ENCODE measurements at regions of chr1 and their contacts with region 1.

Region 1: GRCh38 chr1:169367486-169368405 is at the starts of genes BLZF1 and NME7:
- DNase-seq: peak; percentile 99
- H3K4me3 Mint-ChIP-seq: no peak within 1 kb of the TSS
- H3K27ac Mint-ChIP-seq: peak within 1 kb of the TSS; percentile 36
- H3K4me1 Mint-ChIP-seq: peaks cover 35% of the 10 kb centered on the region
- H3K27me3 Mint-ChIP-seq: no peaks in the 10 kb centered on the region
- total RNA-seq, gene BLZF1: 15.1 and 16.1 TPM in 2 replicates
- total RNA-seq, gene NME7: 13.9 and 25.8 TPM in 2 replicates

Region 2: DNA sequence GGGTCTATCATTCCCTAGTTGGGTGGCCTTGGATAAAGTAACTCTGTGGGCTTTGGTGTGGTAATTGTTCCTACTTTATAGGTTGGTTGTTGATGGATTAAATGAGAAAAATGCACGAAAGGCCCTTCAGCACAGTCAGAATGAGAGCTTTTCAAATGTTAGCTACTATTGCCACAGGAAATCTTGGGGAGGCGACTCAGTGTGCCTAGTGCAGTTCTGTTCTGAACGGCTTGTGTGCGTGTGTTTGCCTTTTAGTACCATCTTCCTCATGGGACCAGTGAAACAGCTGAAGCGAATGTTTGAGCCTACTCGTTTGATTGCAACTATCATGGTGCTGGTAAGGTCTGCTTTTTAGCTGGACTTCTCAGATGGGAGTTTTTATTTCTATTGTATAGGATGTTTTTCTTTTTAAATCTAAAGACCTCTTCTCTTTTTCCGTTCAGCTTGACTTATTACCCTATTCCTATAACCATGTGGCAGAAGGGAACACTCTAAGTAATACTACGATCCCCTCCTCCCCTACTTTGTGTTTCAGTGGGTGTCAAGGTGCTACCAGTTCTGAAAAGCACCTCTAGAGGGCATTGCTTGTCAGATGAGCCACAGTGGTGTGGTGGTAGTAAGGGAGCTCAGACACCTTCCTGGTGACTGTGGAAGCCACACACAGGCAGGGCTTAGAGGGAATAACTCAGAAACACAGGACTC is 1132.7 kb before region 1 on chr1:
- intact Hi-C with region 1: loop called (anchors 5 kb)
- DNase-seq: peak; percentile 39
- H3K4me3 Mint-ChIP-seq: peak overlapping the region; percentile 37
- H3K27ac Mint-ChIP-seq: peak overlapping the region; percentile 82
- H3K4me1 Mint-ChIP-seq: peaks cover 76% of the 10 kb centered on the region
- H3K27me3 Mint-ChIP-seq: no peaks in the 10 kb centered on the region

Region 3: DNA sequence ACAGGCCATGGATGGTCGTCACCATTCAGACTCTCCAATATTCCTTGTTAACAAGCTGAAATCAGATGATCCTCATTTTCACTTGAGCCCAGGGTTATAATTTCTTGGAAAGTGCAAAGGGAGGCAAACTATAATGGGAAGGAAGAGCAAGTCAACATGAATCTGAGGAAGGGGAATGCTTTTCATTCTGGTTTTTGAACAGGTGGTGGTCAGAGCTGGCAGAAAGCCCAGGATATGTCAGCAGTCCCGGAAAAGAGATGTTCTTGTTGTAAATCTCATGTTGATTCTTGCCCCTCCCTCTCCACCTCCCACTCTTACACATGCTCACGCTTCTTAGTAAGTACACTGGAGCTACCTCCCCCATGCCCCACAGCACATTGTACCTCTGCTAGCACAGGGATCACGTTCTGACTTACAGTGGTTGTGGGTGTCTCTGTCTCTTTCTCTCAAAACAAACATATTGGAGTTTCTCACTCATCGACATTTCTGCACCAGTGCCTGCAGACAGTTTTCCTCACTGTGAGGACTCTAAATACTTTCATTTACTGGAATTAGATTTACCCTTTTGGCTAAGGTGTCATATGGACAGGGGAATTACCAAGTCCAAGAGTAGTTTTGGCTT is 901.5 kb before region 1 on chr1:
- intact Hi-C with region 1: loop called (anchors 10 kb)
- DNase-seq: peak; percentile 18
- H3K4me3 Mint-ChIP-seq: peak overlapping the region; percentile 30
- H3K27ac Mint-ChIP-seq: peak overlapping the region; percentile 71
- H3K4me1 Mint-ChIP-seq: peaks cover 67% of the 10 kb centered on the region
- H3K27me3 Mint-ChIP-seq: no peaks in the 10 kb centered on the region

Region 4: DNA sequence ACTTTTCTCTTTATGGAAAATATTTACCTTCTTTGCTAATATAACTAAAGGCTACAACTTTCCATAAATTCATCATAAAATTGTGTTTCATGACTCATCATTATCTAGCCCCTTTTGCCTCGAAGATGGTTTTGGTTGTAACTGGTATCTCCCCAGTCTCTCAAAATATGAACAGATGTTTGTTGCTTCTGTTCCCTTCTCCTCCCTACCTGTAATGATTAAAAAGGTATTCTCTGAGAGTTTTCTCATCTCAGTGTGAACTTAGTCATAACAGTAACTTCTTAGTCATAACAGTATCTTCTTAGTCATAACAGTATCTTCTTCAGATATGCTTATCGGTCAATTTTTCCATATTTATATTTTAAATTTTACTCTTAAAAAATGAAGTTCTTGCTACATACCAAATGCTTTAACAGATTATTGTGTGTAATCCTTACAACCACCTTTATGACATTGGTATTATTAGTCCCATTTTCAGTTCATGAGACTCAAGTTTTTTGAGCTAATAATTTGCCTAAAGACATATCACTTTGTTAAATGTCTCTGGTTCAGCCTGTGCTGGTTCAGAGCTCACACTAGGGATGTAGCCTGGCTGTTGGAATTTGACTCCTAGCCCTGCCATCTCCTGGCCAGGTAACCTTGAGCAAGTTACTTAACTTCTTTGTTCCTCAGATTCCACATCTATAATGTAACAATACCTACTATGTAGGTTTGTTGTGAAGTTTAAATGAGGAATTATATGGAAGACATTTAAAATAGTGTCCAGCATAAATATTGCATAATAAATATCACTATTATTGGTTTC is 228.7 kb before region 1 on chr1:
- intact Hi-C with region 1: loop called (anchors 1 kb)
- DNase-seq: no peak
- H3K4me3 Mint-ChIP-seq: no peak overlapping the region
- H3K27ac Mint-ChIP-seq: peak overlapping the region; percentile 80
- H3K4me1 Mint-ChIP-seq: peaks cover 20% of the 10 kb centered on the region
- H3K27me3 Mint-ChIP-seq: peaks cover 4% of the 10 kb centered on the region

Region 5: DNA sequence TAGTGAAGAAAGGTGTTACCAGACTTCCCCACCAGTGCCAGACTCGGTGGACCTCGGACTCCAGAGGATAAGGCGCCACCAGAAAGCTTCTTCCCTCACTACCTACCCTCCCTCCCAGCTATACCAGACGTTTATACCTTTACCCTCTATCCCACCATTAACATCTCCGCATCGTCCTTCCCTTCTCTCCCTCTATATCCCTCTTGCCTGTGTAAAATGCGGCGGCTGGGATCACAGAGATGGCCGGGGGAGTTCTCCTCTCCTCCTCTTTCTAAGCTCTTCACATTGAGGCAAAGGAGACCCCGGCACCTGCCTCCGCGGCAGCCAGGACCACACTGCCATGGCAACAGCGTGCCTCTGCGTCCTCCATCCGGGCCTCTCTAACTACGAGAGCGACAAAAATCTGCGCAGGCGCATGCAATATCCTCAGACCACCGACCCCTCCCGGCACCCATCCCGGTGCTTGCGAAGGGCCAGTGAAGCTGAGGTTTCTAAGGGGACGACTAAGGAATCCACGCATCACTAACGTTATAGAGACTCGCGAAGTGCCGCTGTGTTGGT is 59.4 kb after region 1 on chr1 and contains the start of gene CCDC181:
- intact Hi-C with region 1: loop called (anchors 2 kb)
- DNase-seq: peak; percentile 65
- H3K4me3 Mint-ChIP-seq: peak within 1 kb of the TSS; percentile 92
- H3K27ac Mint-ChIP-seq: no peak within 1 kb of the TSS
- H3K4me1 Mint-ChIP-seq: peaks cover 7% of the 10 kb centered on the region
- H3K27me3 Mint-ChIP-seq: peaks cover 68% of the 10 kb centered on the region
- total RNA-seq, gene CCDC181: not detected in 2 replicates

Region 6: GRCh38 chr1:169694304-169695075 is 326.7 kb after region 1 on chr1:
- intact Hi-C with region 1: loop called (anchors 5 kb)
- DNase-seq: peak; percentile 56
- H3K4me3 Mint-ChIP-seq: peak overlapping the region; percentile 28
- H3K27ac Mint-ChIP-seq: peak overlapping the region; percentile 90
- H3K4me1 Mint-ChIP-seq: peaks cover 96% of the 10 kb centered on the region
- H3K27me3 Mint-ChIP-seq: no peaks in the 10 kb centered on the region

Region 7: DNA sequence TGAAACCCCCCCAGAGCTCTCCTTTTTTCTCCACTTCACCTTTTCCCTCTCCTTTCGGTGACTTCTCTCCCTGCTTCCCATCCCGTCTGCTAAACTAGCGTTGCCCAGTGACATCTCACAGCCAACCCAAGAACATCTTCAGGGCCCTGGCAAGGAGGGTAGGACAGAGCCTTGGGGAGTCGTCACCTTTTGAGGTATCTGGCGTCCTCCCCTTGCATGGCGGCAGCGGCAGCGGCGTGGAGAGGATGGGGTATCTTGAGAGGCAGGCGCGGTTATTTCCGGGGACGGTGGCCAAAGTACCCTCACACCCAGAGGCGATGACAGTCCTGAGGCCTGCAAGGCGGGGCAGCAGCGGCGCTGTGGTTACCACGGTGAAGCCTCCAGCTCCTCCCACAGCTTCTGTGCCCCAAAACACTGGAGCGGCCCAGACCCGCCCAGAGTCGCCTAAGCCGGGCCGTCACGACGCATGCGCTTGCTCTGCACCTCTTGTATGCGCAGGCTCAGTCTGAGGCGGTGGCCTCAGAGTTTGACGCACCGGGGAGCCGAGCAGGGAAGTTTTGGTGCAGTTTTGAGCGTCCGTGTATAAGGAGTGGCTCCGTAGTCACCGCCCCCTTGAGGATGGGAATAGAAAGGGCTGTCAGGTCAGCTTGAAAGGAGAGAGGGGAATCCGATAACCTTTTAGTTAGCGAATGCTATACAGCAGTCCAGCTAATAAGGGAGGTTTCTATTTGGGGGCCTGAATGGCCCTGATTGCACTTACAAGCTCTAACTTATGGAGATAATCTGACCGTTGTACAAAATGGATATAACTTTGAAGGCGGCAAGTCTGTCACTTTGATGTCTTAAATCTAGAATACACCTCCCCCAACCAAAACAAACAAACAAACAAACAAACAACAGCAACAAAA is 706.8 kb after region 1 on chr1 and contains the start of gene KIFAP3:
- intact Hi-C with region 1: loop called (anchors 5 kb)
- DNase-seq: peak; percentile 95
- H3K4me3 Mint-ChIP-seq: peak within 1 kb of the TSS; percentile 95
- H3K27ac Mint-ChIP-seq: peak within 1 kb of the TSS; percentile 96
- H3K4me1 Mint-ChIP-seq: peaks cover 45% of the 10 kb centered on the region
- H3K27me3 Mint-ChIP-seq: no peaks in the 10 kb centered on the region
- total RNA-seq, gene KIFAP3: 12.9 and 13.5 TPM in 2 replicates